ENCODE measurements at regions of chr18 and their contacts with region 1.

Region 1: DNA sequence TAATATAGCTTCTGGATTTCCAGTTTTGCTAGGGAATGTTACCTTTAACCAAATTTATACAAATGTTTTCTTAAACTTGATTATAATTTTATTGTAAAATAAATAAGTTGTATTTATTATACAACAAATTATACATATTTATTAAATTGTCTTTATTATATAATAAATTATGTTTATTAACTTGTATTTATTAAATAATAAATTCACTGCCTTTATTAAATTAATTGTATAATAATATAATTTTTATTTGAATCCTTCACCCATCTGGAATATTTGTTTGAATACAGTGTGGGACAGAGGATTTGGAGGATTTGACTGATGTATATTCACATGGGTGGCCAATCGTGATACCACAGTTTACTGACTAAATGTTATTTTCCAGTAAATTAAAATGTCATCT is 43.4 kb upstream of the CCDC178 start:
- DNase-seq: no peak
- H3K4me3 Mint-ChIP-seq: no peak overlapping the region
- H3K27ac Mint-ChIP-seq: no peak overlapping the region
- H3K4me1 Mint-ChIP-seq: no peaks in the 10 kb centered on the region
- H3K27me3 Mint-ChIP-seq: no peaks in the 10 kb centered on the region
- CTCF ChIP-seq: no peak

Region 2: DNA sequence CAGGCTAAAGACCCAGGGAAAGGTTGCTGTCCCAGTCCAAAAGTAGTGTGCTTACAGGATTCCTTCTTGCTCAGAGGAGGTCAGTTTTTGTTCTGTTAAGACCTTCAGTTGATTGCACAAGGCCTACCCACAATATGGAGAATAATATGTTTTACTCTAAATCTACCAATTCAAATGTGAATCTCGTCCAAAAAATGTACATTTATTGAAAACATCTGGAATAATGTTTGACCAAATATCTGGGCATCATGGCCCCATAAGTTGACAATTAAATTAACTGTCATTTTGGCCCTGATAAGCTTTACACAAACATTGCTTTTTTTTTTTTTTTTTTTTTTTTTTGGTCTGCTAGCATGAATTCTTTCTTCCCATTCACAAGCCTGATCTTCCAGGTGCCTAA is 153.2 kb before region 1 on chr18:
- CTCF ChIA-PET with region 1: no interaction called
- intact Hi-C with region 1: loop called (anchors 2 kb)
- DNase-seq: no peak
- H3K4me3 Mint-ChIP-seq: no peak overlapping the region
- H3K27ac Mint-ChIP-seq: no peak overlapping the region
- H3K4me1 Mint-ChIP-seq: no peaks in the 10 kb centered on the region
- H3K27me3 Mint-ChIP-seq: no peaks in the 10 kb centered on the region
- CTCF ChIP-seq: no peak

Region 3: GRCh38 chr18:33644494-33644893 is 160.6 kb after region 1 on chr18:
- CTCF ChIA-PET with region 1: no interaction called
- intact Hi-C with region 1: no loop called
- DNase-seq: no peak
- H3K4me3 Mint-ChIP-seq: no peak overlapping the region
- H3K27ac Mint-ChIP-seq: no peak overlapping the region
- H3K4me1 Mint-ChIP-seq: no peaks in the 10 kb centered on the region
- H3K27me3 Mint-ChIP-seq: no peaks in the 10 kb centered on the region
- CTCF ChIP-seq: no peak